ENCODE measurements at regions of chr11 and their contacts with region 1.

Region 1: DNA sequence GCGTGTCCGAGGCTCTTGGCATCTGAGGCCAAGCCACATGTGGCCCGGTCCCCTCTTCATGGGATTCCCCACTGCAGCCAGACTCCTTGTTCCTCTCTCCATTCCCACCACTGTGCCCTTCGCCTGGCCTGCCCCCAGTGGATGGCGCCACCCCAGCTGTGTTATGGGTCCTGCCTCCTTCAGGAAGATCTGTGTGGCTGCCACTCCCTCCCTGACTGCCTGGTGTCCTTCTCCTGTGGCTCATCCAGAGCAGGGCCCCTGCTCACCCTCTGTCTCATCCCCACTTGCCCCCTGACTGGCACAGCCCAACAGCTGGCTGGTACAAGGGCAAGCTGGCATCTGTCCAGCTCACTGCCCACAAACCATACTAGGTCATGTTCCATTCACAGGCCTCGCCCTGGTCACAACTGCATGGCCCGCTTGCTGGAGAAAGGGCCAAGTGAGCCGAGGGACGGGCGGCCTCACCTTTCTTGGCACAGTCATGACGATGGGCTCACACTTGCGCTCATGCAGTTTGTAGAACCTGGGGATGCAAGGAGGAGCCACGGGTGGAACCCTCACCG is 1.9 kb upstream of the PTPRCAP start:
- DNase-seq: peak; percentile 54
- H3K4me3 Mint-ChIP-seq: peak overlapping the region; percentile 94
- H3K27ac Mint-ChIP-seq: peak overlapping the region; percentile 97
- H3K4me1 Mint-ChIP-seq: peaks cover 62% of the 10 kb centered on the region
- H3K27me3 Mint-ChIP-seq: no peaks in the 10 kb centered on the region

Region 2: GRCh38 chr11:67409261-67409666 is 30.1 kb before region 1 on chr11:
- CTCF ChIA-PET with region 1: interaction called, 67 read pairs
- POLR2A ChIA-PET with region 1: interaction called, 361 read pairs
- DNase-seq: peak; percentile 90
- H3K4me3 Mint-ChIP-seq: peak overlapping the region; percentile 85
- H3K27ac Mint-ChIP-seq: peak overlapping the region; percentile 99
- H3K4me1 Mint-ChIP-seq: peaks cover 77% of the 10 kb centered on the region
- H3K27me3 Mint-ChIP-seq: peaks cover 4% of the 10 kb centered on the region

Region 3: DNA sequence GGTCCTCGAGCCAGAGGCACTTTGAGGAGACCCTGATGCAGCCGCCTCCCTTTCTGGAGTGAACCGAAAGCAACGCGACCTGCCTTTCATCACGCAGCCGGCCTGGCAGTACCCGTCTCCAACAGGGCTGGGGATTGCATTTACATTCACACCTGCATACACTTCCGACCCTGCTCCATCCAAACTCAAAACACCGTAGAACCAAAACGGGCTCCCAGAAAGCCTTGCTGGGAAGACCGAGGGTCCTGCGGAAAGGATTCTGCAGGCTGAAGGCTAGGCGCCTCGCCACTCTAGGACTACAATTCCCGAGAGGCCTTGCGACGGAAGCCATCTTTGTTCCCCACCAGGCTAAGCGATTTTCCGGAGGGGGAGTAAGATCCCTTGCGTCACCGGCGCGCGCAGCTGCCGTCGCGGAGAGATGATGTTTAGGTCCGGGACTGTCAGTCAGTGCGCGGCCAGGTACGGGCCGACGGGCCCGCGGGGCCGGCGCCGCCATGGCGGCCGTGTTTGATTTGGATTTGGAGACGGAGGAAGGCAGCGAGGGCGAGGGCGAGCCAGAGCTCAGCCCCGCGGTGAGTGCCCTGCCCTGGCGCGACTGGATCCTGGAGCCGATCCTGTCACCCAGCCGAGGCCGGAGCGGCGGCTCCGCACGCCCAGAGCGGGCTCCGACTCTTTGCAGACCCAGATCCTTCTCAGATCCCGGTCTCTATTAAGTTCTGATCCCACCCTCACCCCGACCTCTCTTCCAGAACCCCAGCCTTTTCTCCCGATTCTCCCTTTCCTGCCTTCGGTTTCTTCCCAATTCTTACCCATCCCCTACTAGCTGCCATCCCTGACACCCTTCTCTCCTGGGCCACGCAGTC is 11.1 kb before region 1 on chr11 and contains the start of gene RPS6KB2:
- CTCF ChIA-PET with region 1: interaction called, 5 read pairs
- POLR2A ChIA-PET with region 1: interaction called, 80 read pairs
- DNase-seq: peak; percentile 100
- H3K4me3 Mint-ChIP-seq: peak within 1 kb of the TSS; percentile 95
- H3K27ac Mint-ChIP-seq: peak within 1 kb of the TSS; percentile 94
- H3K4me1 Mint-ChIP-seq: peaks cover 59% of the 10 kb centered on the region
- H3K27me3 Mint-ChIP-seq: no peaks in the 10 kb centered on the region
- total RNA-seq, gene RPS6KB2: 56.9 to 57.1 TPM

Region 4: DNA sequence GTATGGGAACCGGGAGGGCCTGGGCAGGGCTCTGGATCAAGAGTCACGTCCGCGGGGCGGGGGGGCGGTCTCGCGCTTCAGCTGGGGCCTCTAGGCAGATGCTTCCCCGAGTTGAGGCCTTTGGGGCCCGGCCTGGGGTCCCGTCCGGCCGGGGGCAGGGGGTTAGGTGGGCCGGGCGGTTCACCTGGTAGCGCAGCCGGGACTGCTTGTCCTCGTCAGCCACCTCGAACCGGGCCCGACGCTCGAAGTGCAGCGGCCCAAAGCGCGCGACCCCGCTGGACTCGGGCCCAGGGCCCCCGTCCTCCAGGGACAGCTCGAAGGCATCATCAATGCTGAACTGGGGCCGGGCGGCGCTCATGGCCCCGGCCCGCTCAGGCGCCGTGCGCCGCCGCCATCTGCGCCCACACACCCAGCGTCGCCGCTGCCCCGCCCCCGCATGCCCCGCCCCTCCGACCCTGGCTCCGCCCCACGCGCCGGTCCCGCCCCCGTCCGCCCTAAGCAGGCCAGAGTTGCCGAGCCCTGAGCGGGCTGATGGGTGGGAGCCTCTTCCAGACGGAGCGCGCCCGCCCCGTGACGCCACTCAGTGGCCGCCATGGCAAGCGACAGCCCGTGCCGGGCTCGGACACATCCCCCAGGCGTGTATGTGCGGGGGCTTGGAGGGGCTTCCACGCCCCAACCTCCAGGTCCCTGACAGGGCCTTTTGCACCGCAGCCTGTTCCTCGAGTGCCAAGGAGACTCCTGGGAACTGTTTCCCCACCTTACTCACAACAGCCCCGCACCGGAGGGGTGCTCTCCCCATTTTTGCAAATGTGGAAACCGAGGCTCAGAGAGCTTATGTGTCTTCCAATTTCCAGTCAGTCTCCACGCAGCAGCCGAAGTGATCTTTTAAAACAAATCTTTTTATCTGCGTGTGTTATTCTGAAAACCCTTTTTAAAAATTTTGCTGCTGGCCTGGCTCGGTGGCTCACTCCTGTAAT is 29.7 kb after region 1 on chr11 and contains the start of gene TMEM134:
- CTCF ChIA-PET with region 1: interaction called, 14 read pairs
- POLR2A ChIA-PET with region 1: interaction called, 134 read pairs
- DNase-seq: peak; percentile 93
- H3K4me3 Mint-ChIP-seq: peak within 1 kb of the TSS; percentile 86
- H3K27ac Mint-ChIP-seq: peak within 1 kb of the TSS; percentile 75
- H3K4me1 Mint-ChIP-seq: peaks cover 40% of the 10 kb centered on the region
- H3K27me3 Mint-ChIP-seq: no peaks in the 10 kb centered on the region
- total RNA-seq, gene TMEM134: 36.3 to 37.6 TPM

Region 5: DNA sequence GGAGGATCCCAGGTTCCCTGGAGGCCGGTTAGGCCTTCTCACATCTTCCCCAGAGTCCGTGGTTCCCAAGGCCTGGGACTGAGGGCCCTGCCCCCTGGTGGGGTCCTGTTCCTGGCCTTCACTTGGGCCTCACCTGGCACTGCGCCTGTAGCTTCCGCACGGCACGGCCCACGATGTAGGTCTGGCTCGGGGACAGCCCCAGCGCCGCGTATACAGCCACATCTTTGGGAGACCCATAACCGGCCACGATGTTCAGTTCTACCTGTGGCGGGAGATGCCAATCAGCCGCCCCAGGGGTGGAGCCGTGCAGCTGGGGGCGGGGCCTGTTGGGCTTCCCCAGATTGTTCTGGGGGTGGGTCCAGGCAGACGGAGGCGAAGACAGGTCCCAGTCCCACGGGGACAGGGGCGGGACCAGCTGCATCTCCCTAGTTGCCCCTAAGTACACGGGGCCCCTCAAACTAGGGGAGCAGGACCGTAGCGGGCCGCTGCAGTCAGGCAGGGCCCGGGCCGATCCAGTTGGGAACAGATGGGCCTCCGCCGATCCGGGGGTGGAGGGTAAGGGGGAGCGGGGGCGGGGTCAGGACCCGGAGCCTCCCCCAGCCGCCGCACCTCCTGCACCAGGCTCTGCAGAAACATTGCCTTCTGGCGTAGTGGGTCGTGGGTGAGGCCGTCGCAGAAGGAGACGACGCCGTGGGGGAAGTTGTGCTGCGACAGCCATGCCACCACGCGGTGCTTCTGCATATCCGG is 53.6 kb after region 1 on chr11:
- CTCF ChIA-PET with region 1: interaction called, 3 read pairs
- POLR2A ChIA-PET with region 1: interaction called, 27 read pairs
- DNase-seq: peak; percentile 31
- H3K4me3 Mint-ChIP-seq: no peak overlapping the region
- H3K27ac Mint-ChIP-seq: no peak overlapping the region
- H3K4me1 Mint-ChIP-seq: peaks cover 14% of the 10 kb centered on the region
- H3K27me3 Mint-ChIP-seq: no peaks in the 10 kb centered on the region

Region 6: DNA sequence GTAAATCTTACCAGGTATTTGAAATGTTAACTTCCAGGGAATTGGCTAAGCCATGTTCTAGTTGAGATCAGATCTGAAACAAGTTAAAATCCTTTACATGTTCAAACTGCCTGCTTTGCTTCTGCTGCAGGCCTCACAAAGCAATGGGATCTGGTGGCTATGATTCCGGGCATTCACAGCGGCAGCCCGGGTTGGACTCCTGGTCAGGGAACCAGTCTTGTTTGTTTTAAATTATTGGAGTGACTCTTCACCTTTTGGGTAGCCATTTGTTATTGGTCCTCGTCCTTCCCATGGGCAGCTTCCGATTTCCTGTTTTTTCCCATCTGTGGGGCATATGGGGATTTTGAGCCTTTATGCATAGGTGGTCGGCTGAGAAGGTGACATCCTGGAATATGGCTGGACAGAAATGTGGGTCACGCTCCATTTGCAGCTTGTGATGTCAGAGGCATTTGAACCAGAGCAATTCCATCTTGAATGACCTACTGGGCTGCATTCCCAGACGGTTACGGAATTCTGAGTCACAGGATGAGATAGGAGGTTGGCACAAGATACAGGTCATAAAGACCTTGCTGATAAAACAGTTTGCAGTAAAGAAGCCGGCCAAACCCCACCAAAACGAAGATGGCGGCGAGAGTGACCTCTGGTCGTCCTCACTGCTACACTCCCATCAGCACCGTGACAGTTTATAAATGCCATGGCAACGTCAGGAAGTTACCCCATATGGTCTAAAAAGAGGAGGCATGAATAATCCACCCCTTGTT is 124.1 kb after region 1 on chr11:
- CTCF ChIA-PET with region 1: no interaction called
- POLR2A ChIA-PET with region 1: no interaction called
- DNase-seq: no peak
- H3K4me3 Mint-ChIP-seq: no peak overlapping the region
- H3K27ac Mint-ChIP-seq: no peak overlapping the region
- H3K4me1 Mint-ChIP-seq: peaks cover 11% of the 10 kb centered on the region
- H3K27me3 Mint-ChIP-seq: peaks cover 28% of the 10 kb centered on the region

Measured in activated CD4-positive, alpha-beta memory T cell treated with anti-CD3 and anti-CD28 coated beads, Interleukin-2, amount 10 ng/mL, durations not matched to agents 7 days and 5 days (primary cell).